MCF 10A (cell line): ENCODE measurements at regions of chr6 and their contacts with region 1.

Region 1: GRCh38 chr6:43516697-43517504 is at the starts of genes POLR1C and YIPF3:
- DNase-seq: peak; percentile 98
- H3K4me3 Mint-ChIP-seq: no peak within 1 kb of the TSS
- H3K27ac Mint-ChIP-seq: no peak within 1 kb of the TSS
- H3K4me1 Mint-ChIP-seq: peaks cover 13% of the 10 kb centered on the region
- H3K27me3 Mint-ChIP-seq: no peaks in the 10 kb centered on the region
- CTCF ChIP-seq: no peak
- total RNA-seq, gene POLR1C: 54.9 and 63.6 TPM in 2 replicates
- total RNA-seq, gene YIPF3: 65.1 and 72.9 TPM in 2 replicates

Region 2: DNA sequence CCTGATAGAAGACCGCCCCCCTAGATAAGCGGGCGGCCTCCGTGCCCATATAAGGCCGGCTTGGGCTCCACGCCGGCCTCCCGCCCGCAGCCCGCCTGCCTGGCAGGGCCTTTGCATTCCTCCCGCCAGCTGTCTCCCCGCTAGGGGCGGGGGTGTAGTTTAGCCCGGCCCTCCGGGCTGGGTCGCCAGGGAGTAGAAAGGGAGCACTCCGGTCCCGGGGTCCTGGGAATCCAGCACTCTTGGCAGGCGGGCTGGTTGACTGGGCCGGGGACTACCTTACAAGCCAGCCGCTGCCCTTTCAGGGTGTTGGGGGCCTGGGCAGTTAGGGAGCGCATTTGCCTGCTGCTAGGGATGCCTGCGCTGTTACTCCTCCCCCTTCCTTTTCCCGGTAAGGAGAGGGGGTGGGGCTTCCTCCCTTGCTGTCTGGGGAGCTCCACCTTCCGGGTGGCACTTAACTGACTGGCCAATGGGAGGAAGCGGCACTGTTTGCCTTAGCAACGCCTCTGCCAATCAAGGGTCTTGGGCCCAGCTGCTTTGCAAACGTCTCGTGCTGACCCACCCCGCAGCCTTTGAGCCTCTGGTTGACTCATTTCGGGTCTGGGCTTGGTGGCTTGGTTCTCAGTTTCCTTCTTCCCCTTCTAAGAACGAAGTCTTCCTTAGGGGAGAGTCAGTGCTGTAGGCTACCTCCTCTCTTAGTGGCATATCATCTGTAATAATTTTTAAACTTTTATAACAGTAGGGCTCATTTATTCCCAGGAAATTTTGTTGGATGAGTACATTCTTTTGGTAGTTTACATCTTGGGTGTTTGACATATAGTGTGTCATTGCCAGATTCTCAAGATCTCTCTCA is 342.4 kb before region 1 on chr6:
- CTCF ChIA-PET with region 1: no interaction called
- POLR2A ChIA-PET with region 1: interaction called, 6 read pairs
- intact Hi-C with region 1: loop called (anchors 5 kb)
- DNase-seq: peak; percentile 99
- H3K4me3 Mint-ChIP-seq: peak overlapping the region; percentile 87
- H3K27ac Mint-ChIP-seq: peak overlapping the region; percentile 83
- H3K4me1 Mint-ChIP-seq: peaks cover 30% of the 10 kb centered on the region
- H3K27me3 Mint-ChIP-seq: no peaks in the 10 kb centered on the region
- CTCF ChIP-seq: no peak

Region 3: DNA sequence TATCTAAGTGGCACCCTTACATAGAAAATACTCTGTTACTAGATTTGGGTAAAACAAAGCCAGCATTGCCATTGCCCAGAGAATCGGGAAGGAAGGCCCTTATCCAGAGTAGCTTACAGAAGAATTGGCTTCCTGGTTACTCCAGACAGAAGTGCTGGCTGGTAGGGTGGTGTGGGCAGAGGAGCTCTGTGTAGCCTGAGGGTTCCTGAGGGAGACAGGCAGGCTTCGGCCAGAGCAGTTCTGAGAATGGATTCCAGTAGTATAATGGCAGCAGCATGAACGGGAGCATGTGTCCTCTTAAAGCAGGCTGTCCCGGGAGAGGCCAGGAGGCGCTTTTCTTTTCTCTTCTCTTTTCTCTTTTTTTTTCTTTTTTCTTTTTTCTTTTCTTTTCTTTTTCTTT is 323.0 kb before region 1 on chr6:
- CTCF ChIA-PET with region 1: no interaction called
- POLR2A ChIA-PET with region 1: no interaction called
- intact Hi-C with region 1: no loop called
- DNase-seq: no peak
- H3K4me3 Mint-ChIP-seq: no peak overlapping the region
- H3K27ac Mint-ChIP-seq: no peak overlapping the region
- H3K4me1 Mint-ChIP-seq: no peaks in the 10 kb centered on the region
- H3K27me3 Mint-ChIP-seq: no peaks in the 10 kb centered on the region
- CTCF ChIP-seq: no peak

Region 4: DNA sequence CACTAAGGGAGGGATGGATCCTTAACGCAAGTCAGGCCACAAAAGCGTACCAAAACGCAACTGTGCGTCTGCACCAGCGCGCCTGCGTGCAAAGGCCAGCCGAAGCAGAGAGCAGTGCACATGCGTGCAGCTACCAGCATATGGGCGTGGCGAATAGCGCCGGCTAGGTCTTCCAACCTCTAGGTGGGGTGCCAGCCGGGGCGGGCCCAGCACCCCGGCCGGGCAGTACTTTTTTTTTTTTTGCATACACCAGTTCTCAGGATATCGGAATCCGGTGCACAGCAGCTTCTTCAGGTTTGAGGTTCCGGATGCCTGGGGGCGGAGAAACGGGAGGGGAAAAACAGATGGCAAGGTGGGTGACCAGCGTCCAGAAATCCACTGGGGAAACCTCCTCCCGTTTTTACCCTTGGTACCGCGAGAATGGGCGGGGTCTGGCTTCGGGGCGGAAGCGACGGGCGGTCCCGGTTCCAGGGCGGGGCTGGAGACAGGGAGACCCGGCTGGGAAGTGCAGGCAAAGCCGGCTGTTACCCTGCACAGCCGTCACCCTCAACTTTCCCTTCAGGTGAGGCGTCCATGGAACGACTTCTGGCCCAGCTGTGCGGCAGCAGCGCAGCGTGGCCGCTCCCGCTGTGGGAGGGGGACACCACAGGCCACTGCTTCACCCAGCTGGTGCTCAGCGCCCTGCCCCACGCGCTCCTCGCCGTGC is 89.3 kb before region 1 on chr6 and contains the start of gene ABCC10:
- CTCF ChIA-PET with region 1: interaction called, 3 read pairs
- POLR2A ChIA-PET with region 1: interaction called, 18 read pairs
- intact Hi-C with region 1: no loop called
- DNase-seq: peak; percentile 95
- H3K4me3 Mint-ChIP-seq: peak within 1 kb of the TSS; percentile 87
- H3K27ac Mint-ChIP-seq: peak within 1 kb of the TSS; percentile 63
- H3K4me1 Mint-ChIP-seq: peaks cover 10% of the 10 kb centered on the region
- H3K27me3 Mint-ChIP-seq: no peaks in the 10 kb centered on the region
- CTCF ChIP-seq: no peak
- total RNA-seq, gene ABCC10: 25.6 and 25.9 TPM in 2 replicates